ENCODE measurements at regions of chr12 and their contacts with region 1.

Region 1: DNA sequence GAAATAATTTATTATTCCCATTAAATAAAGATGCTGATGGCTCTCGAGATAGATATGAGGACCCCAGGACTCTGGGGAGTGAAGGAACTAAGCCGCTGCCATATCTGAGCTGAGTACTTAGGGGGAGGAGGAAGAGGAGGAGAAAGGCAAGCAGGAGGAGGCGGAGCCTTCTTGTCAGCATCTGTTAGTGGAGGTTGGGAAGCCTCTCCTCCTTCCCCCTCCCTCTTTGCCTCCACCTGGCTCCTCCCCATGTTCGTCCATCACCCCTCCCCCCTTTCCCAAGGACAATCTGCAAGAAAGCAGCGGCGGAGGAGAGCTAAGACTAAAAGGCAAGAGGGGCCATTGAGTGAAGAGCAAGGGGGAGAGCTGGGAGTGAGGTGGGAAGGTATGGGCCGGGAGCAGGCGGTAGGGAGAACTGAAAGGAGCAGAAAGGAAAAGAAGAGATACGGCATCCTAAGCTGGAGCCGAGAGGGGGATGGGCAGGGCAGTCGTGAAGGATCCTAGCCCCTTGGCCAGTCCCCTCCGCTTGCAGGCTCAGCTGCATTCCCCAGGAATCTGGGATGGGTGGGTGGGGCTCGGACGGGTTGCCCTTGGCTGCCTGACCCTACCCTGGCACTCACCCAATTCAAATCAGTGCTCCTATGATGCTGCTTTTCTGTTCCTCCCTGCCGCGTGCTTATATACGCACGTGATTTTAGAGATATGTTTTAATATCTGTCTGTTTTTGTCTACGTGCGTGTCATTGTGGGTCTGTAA is at the start of gene PFKM:
- DNase-seq: peak; percentile 91 to 95
- ATAC-seq: peak; percentile 87 to 90
- H3K4me3 ChIP-seq: peak within 1 kb of the TSS; percentile 71 to 89 (median 86)
- H3K27ac ChIP-seq: peak within 1 kb of the TSS; percentile 84 to 98 (median 93)
- H3K4me1 ChIP-seq: peaks cover 8 to 18% of the 10 kb centered on the region in 2 donors
- H3K27me3 ChIP-seq: no peaks in the 10 kb centered on the region
- CTCF ChIP-seq: no peak
- POLR2A ChIP-seq: peak; percentile 80 to 88
- total RNA-seq, gene PFKM: 341 to 1,022 (median 763) TPM

Region 2: GRCh38 chr12:48157018-48157888 is 38.0 kb after region 1 on chr12 and contains the start of gene ASB8:
- in situ Hi-C with region 1: loop called in 1 of 4 experiments (anchors 5 kb)
- intact Hi-C with region 1: loop called (anchors 2 kb)
- DNase-seq: peak; percentile 98 to 100
- ATAC-seq: peak; percentile 78 to 82
- H3K4me3 ChIP-seq: peak within 1 kb of the TSS; percentile 63 to 82 (median 74)
- H3K27ac ChIP-seq: peak within 1 kb of the TSS; percentile 84 to 98 (median 93)
- H3K4me1 ChIP-seq: peaks cover 54 to 73% of the 10 kb centered on the region in 2 donors
- H3K27me3 ChIP-seq: no peaks in the 10 kb centered on the region
- CTCF ChIP-seq: peak; percentile 43 to 60 (median 54)
- POLR2A ChIP-seq: peak; percentile 66 to 82
- total RNA-seq, gene ASB8: 134 to 359 (median 210) TPM

Measured in gastrocnemius medialis (tissue), 4 donors.